ENCODE measurements at regions of chr9 and their contacts with region 1.

Region 1: GRCh38 chr9:38392235-38393127 is at the start of gene ALDH1B1:
- DNase-seq: peak; percentile 78 to 79
- ATAC-seq: peak; percentile 84 to 88
- H3K4me3 ChIP-seq: peak within 1 kb of the TSS; percentile 65 to 82 (median 76)
- H3K27ac ChIP-seq: peak within 1 kb of the TSS; percentile 69 to 88 (median 82)
- H3K4me1 ChIP-seq: peaks cover 20 to 25% of the 10 kb centered on the region in 2 donors
- H3K27me3 ChIP-seq: no peaks in the 10 kb centered on the region
- CTCF ChIP-seq: peak in 2 of 5 experiments; percentile 10 to 26
- POLR2A ChIP-seq: peak; percentile 40 to 79
- total RNA-seq, gene ALDH1B1: 21.0 to 50.9 (median 36.0) TPM

Region 2: GRCh38 chr9:37994639-37995347 is 397.7 kb before region 1 on chr9:
- in situ Hi-C with region 1: no loop called
- intact Hi-C with region 1: no loop called
- DNase-seq: peak; percentile 83 to 90
- ATAC-seq: peak; percentile 92 to 97
- H3K4me3 ChIP-seq: peak overlapping the region in 3 of 4 donors; percentile 7 to 31 (median 29)
- H3K27ac ChIP-seq: peak overlapping the region; percentile 76 to 88 (median 82)
- H3K4me1 ChIP-seq: peaks cover 19 to 27% of the 10 kb centered on the region in 2 donors
- H3K27me3 ChIP-seq: no peaks in the 10 kb centered on the region
- CTCF ChIP-seq: no peak
- POLR2A ChIP-seq: peak in 1 of 2 donors; percentile 27

Region 3: GRCh38 chr9:38096238-38096805 is 296.2 kb before region 1 on chr9:
- in situ Hi-C with region 1: no loop called
- intact Hi-C with region 1: loop called (anchors 5 kb)
- DNase-seq: peak; percentile 70 to 89
- ATAC-seq: peak; percentile 96 to 97
- H3K4me3 ChIP-seq: no peak overlapping the region
- H3K27ac ChIP-seq: peak overlapping the region in 1 of 4 donors; percentile 58
- H3K4me1 ChIP-seq: no peaks in the 10 kb centered on the region
- H3K27me3 ChIP-seq: no peaks in the 10 kb centered on the region
- CTCF ChIP-seq: no peak
- POLR2A ChIP-seq: no peak

Region 4: DNA sequence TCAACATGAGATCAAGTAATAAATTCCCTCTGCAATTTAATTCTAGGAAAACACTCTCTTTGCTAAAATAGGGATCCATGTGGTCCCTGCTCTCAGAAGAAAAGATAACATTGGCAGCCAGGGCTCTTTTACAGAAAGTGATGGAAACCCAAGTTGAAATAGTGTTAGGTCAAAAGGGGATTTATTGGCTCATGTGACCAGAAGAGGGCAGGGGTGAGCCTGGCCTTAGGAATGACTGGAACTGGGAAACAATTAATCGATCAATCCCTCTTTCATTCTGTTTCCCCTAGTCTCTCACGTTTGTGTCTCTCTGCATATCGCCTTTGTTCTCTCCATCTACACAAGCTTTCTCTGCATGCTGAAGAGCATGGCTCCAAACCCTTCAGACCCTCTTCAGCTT is 58.2 kb before region 1 on chr9:
- in situ Hi-C with region 1: no loop called
- intact Hi-C with region 1: no loop called
- DNase-seq: no peak
- ATAC-seq: no peak
- H3K4me3 ChIP-seq: no peak overlapping the region
- H3K27ac ChIP-seq: no peak overlapping the region
- H3K4me1 ChIP-seq: no peaks in the 10 kb centered on the region
- H3K27me3 ChIP-seq: no peaks in the 10 kb centered on the region
- CTCF ChIP-seq: no peak
- POLR2A ChIP-seq: no peak

Region 5: DNA sequence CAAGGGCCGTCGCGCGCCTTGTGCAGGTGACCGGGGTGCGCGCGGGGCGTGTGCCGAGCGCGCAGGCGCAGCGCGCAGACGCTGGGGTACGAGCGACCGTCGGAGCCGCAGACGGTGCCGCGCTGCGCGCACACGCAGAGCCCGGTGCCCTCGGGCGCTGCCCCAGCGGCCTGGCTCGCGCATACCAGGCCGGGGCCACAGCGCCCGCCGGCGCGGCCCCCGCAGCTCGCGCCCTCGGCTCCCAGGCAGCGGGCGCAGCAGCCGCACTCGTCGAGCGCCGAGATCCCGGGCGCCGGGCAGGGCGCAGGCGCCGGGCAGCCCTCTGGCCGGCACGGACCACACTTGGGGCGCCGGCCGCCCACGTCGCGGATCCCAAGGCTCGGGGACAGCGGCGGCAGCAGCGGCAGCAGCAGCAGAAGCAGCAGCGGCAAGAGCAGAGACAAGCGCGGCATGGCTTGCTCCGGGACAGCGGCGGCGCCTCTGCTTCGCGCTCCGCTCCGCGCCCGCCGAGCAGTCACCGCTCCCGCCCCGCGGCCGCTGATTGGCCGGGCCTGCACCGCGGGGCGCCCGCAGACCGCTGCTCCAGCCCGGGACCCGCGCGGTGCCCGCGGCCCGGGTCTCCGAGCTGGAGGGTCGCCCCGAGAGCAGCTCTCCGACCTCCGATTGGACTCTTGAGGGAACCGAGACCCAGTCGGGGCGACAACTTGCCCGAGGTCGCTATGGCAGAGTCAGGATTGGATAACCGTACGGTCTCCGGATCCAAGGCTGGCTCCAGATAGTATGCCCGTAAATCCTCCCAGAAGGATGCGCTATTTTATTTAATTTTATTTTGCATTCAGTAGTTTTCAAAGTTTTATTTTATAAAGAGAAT is 31.7 kb after region 1 on chr9 and contains the start of gene IGFBPL1:
- in situ Hi-C with region 1: no loop called
- intact Hi-C with region 1: no loop called
- DNase-seq: no peak
- ATAC-seq: no peak
- H3K4me3 ChIP-seq: peak within 1 kb of the TSS in 2 of 4 donors; percentile 22
- H3K27ac ChIP-seq: no peak within 1 kb of the TSS
- H3K4me1 ChIP-seq: no peaks in the 10 kb centered on the region
- H3K27me3 ChIP-seq: peaks cover 13 to 33% (median 31%) of the 10 kb centered on the region in 3 donors
- CTCF ChIP-seq: no peak
- POLR2A ChIP-seq: no peak
- total RNA-seq, gene IGFBPL1: not detected

Region 6: GRCh38 chr9:38453835-38454234 is 61.4 kb after region 1 on chr9:
- in situ Hi-C with region 1: no loop called
- intact Hi-C with region 1: no loop called
- DNase-seq: no peak
- ATAC-seq: no peak
- H3K4me3 ChIP-seq: no peak overlapping the region
- H3K27ac ChIP-seq: no peak overlapping the region
- H3K4me1 ChIP-seq: no peaks in the 10 kb centered on the region
- H3K27me3 ChIP-seq: no peaks in the 10 kb centered on the region
- CTCF ChIP-seq: no peak
- POLR2A ChIP-seq: no peak

Region 7: DNA sequence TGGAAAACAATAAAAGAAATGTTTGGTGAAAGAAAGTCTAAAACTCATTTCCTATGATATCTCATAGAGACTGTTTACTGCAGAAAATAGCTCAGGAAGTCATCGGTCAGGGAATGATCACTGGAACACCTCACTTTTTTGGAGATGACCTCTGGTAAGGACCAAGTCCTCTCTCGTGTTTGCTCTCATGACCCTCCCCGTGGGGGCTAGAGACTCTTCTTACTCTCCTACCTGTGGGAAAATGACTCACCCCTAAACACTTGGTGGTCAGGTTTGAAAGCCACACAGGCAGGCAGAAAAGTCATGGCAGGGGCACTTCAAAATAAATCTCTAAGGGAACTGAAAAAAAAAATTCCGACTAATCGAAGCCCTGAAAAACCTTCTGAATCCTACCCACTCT is 279.3 kb after region 1 on chr9:
- in situ Hi-C with region 1: no loop called
- intact Hi-C with region 1: loop called (anchors 10 kb)
- DNase-seq: no peak
- ATAC-seq: no peak
- H3K4me3 ChIP-seq: no peak overlapping the region
- H3K27ac ChIP-seq: no peak overlapping the region
- H3K4me1 ChIP-seq: peaks cover 0 to 4% of the 10 kb centered on the region in 2 donors
- H3K27me3 ChIP-seq: no peaks in the 10 kb centered on the region
- CTCF ChIP-seq: no peak
- POLR2A ChIP-seq: no peak

Measured in gastrocnemius medialis (tissue), 4 donors.